Activated CD4-positive, alpha-beta T cell treated with anti-CD3 and anti-CD28 coated beads, Interleukin-2, amount 10 ng/mL, durations not matched to agents 7 days and 5 days (primary cell): ENCODE measurements at regions of chr3 and their contacts with region 1.

Region 1: GRCh38 chr3:45938864-45939263 is 4.4 kb upstream of the CXCR6 start:
- DNase-seq: peak; percentile 91
- H3K4me3 Mint-ChIP-seq: no peak overlapping the region
- H3K27ac Mint-ChIP-seq: no peak overlapping the region
- H3K4me1 Mint-ChIP-seq: peaks cover 40% of the 10 kb centered on the region
- H3K27me3 Mint-ChIP-seq: no peaks in the 10 kb centered on the region

Region 2: GRCh38 chr3:45890405-45890804 is 48.5 kb before region 1 on chr3:
- CTCF ChIA-PET with region 1: no interaction called
- POLR2A ChIA-PET with region 1: no interaction called
- DNase-seq: no peak
- H3K4me3 Mint-ChIP-seq: no peak overlapping the region
- H3K27ac Mint-ChIP-seq: no peak overlapping the region
- H3K4me1 Mint-ChIP-seq: peaks cover 12% of the 10 kb centered on the region
- H3K27me3 Mint-ChIP-seq: peaks cover 68% of the 10 kb centered on the region

Region 3: GRCh38 chr3:46001178-46001577 is 62.3 kb after region 1 on chr3:
- CTCF ChIA-PET with region 1: no interaction called
- POLR2A ChIA-PET with region 1: no interaction called
- DNase-seq: no peak
- H3K4me3 Mint-ChIP-seq: no peak overlapping the region
- H3K27ac Mint-ChIP-seq: no peak overlapping the region
- H3K4me1 Mint-ChIP-seq: peaks cover 8% of the 10 kb centered on the region
- H3K27me3 Mint-ChIP-seq: peaks cover 10% of the 10 kb centered on the region

Region 4: DNA sequence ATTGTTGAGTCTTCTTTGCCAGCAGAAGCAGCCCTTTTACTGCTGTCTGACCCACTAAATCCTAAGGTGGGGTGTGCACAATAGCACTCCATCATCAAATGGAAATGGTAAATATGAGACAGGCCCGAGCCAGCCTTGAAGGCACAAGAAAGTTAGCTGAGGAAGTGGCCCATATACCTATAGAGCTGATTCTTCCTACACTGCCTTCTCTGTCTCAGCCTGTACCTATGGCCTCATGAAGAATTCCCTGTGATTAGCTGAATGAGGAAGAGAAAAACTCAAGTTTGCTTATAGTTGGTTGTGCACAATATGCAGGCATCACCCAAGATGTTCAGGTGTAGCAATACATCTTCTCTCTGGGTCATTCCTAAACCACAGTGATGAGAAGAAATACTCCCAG is 120.1 kb after region 1 on chr3:
- CTCF ChIA-PET with region 1: no interaction called
- POLR2A ChIA-PET with region 1: no interaction called
- DNase-seq: no peak
- H3K4me3 Mint-ChIP-seq: no peak overlapping the region
- H3K27ac Mint-ChIP-seq: no peak overlapping the region
- H3K4me1 Mint-ChIP-seq: peaks cover 2% of the 10 kb centered on the region
- H3K27me3 Mint-ChIP-seq: peaks cover 79% of the 10 kb centered on the region

Region 5: GRCh38 chr3:46089237-46090011 is 150.6 kb after region 1 on chr3:
- CTCF ChIA-PET with region 1: interaction called, 49 read pairs
- POLR2A ChIA-PET with region 1: no interaction called
- DNase-seq: no peak
- H3K4me3 Mint-ChIP-seq: no peak overlapping the region
- H3K27ac Mint-ChIP-seq: no peak overlapping the region
- H3K4me1 Mint-ChIP-seq: peaks cover 39% of the 10 kb centered on the region
- H3K27me3 Mint-ChIP-seq: peaks cover 32% of the 10 kb centered on the region

Region 6: GRCh38 chr3:46759239-46760167 is 820.6 kb after region 1 on chr3:
- CTCF ChIA-PET with region 1: no interaction called
- POLR2A ChIA-PET with region 1: no interaction called
- DNase-seq: no peak
- H3K4me3 Mint-ChIP-seq: no peak overlapping the region
- H3K27ac Mint-ChIP-seq: no peak overlapping the region
- H3K4me1 Mint-ChIP-seq: no peaks in the 10 kb centered on the region
- H3K27me3 Mint-ChIP-seq: no peaks in the 10 kb centered on the region